ENCODE measurements at regions of chr7 and their contacts with region 1.

Region 1: GRCh38 chr7:4973728-4974198 is 14.8 kb upstream of the MMD2 start:
- DNase-seq: peak; percentile 85 to 99 (median 90)

Region 2: DNA sequence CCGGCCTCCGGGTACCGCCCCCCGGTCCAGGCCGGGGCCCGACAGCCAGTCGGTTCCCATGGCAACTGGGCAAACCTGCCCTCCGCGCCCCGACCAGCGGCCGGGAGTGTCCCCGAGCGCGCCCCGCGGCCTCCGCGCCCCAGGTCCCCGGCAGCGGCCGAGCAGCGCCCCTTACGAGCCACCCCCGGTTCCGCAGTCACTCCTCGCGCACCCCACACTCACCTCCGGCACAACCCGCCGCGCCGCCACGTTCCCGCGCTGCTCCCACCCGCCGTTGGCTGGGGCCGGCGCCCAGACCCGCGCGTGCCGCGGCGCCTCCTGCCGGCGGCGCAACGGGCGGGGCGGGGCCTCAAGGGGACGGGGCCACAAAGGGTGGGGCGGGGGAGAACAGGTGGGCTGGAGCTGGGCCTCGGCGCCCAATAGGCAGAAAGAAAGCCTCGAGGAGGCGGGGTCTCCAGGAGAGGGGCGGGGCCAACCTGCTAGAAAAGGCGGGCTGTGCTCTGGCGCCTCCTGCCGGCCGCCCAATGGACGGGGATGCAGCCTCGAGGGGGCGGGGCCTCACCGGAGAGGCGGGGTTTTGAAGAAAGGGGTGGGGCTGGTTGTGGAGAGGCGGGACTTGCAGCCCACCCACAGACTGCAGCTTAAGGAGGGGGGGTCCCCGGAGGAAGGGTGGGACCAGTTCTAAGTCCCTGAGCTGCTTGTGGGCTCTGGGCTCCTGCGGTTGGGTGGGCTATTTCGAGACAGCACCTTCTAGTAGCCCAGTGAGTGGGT is 90.2 kb before region 1 on chr7 and contains the start of gene RADIL:
- intact Hi-C with region 1: loop called (anchors 10 kb)
- DNase-seq: peak; percentile 86 to 99 (median 94)

Region 3: GRCh38 chr7:5083311-5083711 is 109.5 kb after region 1 on chr7:
- intact Hi-C with region 1: loop called (anchors 2 kb)
- DNase-seq: no peak

Measured in posterior cingulate gyrus (tissue), 11 donors.